ENCODE measurements at regions of chr17 and their contacts with region 1.

Region 1: DNA sequence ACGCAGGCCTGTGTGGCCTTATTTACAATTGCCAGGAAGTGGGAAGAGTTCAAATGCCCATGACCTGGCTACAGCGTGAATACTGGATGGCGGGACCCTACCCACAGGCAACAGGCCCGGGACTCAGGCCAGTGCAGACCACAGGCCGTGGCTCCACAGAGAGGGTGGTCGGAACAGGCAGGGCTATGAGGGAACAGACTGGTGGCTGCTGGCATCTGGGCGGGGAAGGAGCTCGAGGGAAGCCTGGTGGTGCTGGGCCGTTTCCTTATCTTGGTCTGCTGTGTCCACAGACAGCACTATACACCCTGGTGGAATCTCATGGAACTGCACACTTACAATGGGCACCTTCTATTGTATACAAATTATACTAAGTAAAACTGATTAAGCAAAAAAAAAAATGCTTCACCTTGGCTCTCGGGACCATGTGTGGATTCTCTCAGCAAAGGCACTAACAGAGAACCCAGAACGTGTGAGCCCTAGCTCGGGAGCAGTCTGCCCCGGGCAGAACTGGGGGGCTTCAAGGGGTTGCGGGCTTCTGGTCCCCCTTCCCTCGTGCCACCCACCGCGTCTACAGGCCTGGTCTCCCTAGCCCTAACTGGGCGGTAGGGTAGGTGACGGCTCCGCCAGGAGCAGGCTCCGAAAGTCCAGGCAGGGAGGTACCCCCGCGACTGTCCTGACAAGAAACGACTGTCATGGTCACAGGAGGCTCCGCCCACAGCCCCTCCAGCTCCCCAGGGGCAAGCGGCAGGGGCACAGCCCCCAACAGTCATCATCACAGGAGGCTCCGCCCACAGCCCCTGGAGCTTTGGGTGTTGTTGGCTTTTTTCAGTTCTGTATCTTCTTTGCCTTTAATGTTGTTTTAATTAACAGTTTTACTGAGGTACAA is 21.8 kb downstream of the CEP131 start:
- DNase-seq: peak; percentile 3
- H3K4me3 ChIP-seq: no peak overlapping the region
- H3K27me3 ChIP-seq: no peaks in the 10 kb centered on the region
- CTCF ChIP-seq: peak; percentile 68

Region 2: GRCh38 chr17:81114351-81115093 is 86.4 kb before region 1 on chr17:
- CTCF ChIA-PET with region 1: no interaction called
- POLR2A ChIA-PET with region 1: no interaction called
- DNase-seq: no peak
- H3K4me3 ChIP-seq: no peak overlapping the region
- H3K27me3 ChIP-seq: no peaks in the 10 kb centered on the region
- CTCF ChIP-seq: no peak

Region 3: GRCh38 chr17:81142301-81143199 is 58.4 kb before region 1 on chr17:
- CTCF ChIA-PET with region 1: interaction called, 26 read pairs
- POLR2A ChIA-PET with region 1: no interaction called
- DNase-seq: peak; percentile 9
- H3K4me3 ChIP-seq: no peak overlapping the region
- H3K27me3 ChIP-seq: no peaks in the 10 kb centered on the region
- CTCF ChIP-seq: peak; percentile 80

Region 4: GRCh38 chr17:81189670-81190530 is 11.0 kb before region 1 on chr17:
- CTCF ChIA-PET with region 1: interaction called, 12 read pairs
- POLR2A ChIA-PET with region 1: no interaction called
- DNase-seq: no peak
- H3K4me3 ChIP-seq: no peak overlapping the region
- H3K27me3 ChIP-seq: no peaks in the 10 kb centered on the region; the same call in 1 of the 2 replicates
- CTCF ChIP-seq: peak; percentile 22; the same call in 1 of the 2 replicates

Region 5: DNA sequence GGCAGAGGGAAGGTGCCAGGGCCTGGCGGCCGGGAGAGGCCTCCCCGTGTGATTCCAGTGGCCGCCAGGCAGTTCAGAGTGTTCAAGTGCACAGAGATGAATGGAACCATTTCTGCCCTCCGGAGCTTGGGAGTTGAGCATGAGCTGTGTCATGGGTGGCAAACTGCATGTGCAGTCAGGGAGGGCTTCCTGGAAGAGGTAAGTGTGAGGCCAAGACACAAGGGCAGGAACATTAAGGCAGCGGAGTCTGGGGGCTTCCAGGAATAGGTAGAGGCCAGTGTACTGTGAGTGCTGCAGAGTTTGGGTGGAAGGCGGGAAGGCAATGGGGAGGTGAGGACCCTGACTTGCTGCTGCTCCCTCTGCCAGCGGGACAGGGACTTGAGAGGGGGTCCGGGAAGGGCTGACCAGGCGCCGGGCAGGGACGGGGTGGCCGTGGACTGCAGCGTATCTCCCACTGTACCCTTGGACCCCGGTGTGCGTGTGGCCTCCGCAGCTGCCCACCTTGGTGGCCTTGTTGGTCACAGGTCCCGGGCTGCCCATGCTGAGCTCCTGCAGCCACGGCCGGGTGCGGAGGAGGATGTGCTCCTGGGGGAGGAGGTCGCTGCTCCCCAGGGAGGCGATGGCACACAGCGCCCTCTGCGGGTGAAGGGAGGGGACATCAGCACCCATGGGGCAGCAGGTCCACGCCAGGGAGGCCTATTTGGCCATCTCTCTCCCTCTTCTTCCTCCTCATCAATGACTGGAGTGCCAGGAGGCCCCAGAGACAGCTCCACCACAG is 29.3 kb after region 1 on chr17:
- CTCF ChIA-PET with region 1: no interaction called
- POLR2A ChIA-PET with region 1: no interaction called
- DNase-seq: no peak
- H3K4me3 ChIP-seq: no peak overlapping the region
- H3K27me3 ChIP-seq: no peaks in the 10 kb centered on the region
- CTCF ChIP-seq: peak; percentile 36

Measured in BJ (cell line).